Panc1 (cell line): ENCODE measurements at regions of chr7 and their contacts with region 1.

Region 1: DNA sequence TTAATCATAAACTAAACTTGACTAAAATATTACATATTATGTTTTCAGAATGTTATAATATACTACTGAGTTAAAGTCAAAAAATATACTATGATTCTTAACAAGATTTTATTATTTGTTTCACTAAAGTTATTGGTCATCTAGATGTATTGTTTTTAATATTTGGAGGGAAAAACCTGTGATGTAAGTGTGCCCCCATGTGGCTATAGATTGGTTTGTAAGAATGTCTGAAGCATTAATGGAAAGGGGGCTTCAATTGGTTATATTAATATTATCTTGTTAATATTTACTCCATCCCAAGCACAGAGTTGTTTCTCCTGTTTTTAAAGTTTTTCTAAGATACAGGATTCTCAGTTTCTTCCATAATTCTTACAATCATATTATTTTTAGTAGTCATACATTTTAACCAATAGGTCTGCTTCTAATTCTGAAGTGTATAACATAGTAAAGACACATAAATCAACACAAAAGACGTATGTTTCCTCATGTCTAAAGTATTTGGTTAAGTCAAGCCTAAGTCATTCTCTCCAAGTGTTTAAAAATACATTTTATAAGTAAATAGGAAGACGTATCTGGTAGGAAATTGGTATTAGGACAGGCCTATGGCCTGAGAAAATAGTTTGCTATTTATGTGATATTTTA is 58.0 kb downstream of the GNAT3 start:
- DNase-seq: no peak
- ATAC-seq: no peak; the same call in 1 of the 2 replicates
- H3K4me3 ChIP-seq: no peak overlapping the region
- H3K27ac ChIP-seq: no peak overlapping the region
- H3K4me1 ChIP-seq: no peaks in the 10 kb centered on the region
- H3K27me3 ChIP-seq: no peaks in the 10 kb centered on the region
- CTCF ChIP-seq: peak; percentile 46; the same call in 1 of the 2 replicates

Region 2: GRCh38 chr7:78649976-78650375 is 1803.8 kb before region 1 on chr7:
- CTCF ChIA-PET with region 1: interaction called, 14 read pairs
- POLR2A ChIA-PET with region 1: no interaction called
- in situ Hi-C with region 1: no loop called
- intact Hi-C with region 1: no loop called
- DNase-seq: no peak
- ATAC-seq: no peak
- H3K4me3 ChIP-seq: no peak overlapping the region
- H3K27ac ChIP-seq: no peak overlapping the region
- H3K4me1 ChIP-seq: no peaks in the 10 kb centered on the region
- H3K27me3 ChIP-seq: no peaks in the 10 kb centered on the region
- CTCF ChIP-seq: no peak

Region 3: DNA sequence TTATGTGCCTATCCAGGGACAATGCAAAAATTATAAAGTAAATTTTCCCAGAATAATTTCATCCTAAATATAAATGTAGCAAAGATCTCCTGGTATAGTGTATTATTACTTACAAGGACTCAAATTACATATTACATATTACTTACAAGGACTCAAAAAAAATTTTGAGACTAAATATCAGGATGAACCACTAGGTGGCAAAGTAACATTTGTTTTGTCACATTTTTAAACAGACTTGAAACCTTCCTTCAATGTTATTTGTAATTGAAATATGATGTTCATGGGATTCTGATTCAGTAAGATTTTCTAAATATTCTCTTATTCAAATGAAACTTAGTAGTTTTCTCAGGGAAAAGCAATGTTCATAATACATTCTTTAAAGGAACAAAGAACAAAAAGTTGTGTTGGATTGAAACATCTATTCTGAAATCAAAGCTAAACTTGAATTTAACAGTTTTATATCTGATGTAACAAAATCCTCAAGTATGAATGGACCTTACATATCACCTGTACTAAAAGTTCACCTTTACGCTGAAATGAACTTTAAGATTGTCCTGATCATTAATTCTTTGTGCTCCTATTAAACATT is 393.5 kb before region 1 on chr7:
- CTCF ChIA-PET with region 1: no interaction called
- POLR2A ChIA-PET with region 1: no interaction called
- in situ Hi-C with region 1: no loop called
- intact Hi-C with region 1: loop called (anchors 2 kb)
- DNase-seq: peak; percentile 62
- ATAC-seq: no peak
- H3K4me3 ChIP-seq: no peak overlapping the region
- H3K27ac ChIP-seq: no peak overlapping the region
- H3K4me1 ChIP-seq: no peaks in the 10 kb centered on the region
- H3K27me3 ChIP-seq: no peaks in the 10 kb centered on the region
- CTCF ChIP-seq: peak; percentile 18; the same call in 1 of the 2 replicates

Region 4: DNA sequence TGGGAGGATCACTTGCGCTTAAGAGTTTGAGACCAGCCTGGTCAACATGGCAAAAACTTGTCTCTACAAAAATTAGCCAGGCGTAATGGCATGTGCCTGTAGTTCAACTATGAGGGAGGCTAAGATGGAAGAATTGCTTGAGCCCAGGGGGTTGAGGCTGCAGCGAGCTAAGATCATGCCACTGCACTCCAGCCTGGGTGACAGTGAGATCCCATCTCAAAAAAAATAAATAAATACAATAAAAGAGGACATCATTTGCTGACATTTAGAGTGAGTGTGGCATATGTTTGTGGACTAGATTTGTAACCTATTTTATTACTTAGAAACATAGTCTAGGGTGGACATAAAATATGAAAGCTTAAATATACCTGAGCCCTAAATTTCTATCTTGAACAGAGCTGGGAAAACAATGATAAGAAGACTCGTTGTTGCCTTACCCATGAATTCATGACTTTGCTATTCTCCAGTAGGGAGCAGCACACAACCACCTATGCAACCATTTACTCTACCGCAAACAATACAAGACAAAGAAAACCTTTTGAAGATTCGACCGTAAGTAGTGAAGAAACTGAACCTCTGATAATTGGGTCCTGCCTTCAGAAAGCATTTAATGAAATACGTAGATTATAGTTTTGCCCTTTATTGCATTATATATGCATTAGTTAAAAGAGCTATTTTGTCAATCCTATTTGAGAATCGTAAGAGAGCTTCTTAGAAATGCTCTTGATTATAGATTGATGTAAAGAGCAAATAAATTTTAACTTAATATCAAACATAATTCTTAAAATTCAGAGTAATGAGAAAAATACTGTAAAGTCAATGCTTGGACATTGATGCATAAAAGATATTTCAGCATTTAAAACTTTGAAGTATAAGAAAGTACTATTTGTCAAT is 25.4 kb before region 1 on chr7:
- CTCF ChIA-PET with region 1: no interaction called
- POLR2A ChIA-PET with region 1: no interaction called
- in situ Hi-C with region 1: no loop called
- intact Hi-C with region 1: no loop called
- DNase-seq: peak; percentile 76
- ATAC-seq: peak; percentile 97
- H3K4me3 ChIP-seq: no peak overlapping the region
- H3K27ac ChIP-seq: no peak overlapping the region
- H3K4me1 ChIP-seq: no peaks in the 10 kb centered on the region
- H3K27me3 ChIP-seq: peaks cover 2% of the 10 kb centered on the region; the same call in 1 of the 2 replicates
- CTCF ChIP-seq: peak; percentile 73; the same call in 1 of the 2 replicates